ENCODE measurements at regions of chr6 and their contacts with region 1.

Region 1: DNA sequence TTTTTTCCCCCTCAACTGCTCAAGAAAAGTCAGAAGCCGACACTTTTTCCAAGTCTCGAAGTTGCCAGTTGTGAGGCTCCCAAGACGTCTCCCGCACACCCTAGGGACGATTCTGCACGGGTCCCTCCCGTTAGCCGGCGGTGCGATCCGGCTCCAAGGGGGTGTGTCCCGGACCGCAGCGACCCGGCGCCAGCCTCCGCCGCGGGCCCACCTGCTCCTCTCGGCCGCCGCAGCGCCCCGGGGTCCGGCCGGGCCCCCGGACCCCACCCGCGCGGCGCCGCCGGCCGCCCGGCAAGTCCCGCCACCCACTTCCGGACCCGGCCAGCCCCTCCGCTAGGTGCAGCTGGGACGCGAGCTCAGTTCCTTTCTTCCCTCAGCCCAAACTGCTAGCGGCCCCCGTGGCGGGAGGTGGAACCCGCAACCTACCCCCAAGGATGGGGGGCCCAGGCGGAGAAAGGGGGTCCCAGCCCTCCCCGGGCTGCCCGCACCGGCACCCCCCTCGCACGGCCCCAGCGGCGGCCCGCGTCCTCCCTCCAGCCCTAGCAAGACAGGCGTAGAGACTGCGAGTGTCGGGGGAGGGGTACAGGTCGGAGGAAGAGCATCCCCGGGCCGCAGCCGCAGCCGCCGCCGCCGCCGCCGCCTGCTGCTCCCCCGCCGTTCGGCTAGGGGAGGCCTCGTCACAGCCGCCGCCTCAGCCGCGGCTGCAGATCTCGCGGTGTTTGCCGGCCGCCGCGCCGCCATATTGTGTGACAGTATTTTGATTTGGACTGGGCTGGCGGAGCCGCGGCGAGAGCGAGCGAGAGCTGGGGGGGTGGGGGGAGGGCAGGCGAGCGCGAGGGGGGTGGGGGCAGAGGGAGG is 485 bp upstream of the TAB2 start:
- DNase-seq: peak; percentile 82 to 94 (median 88)
- ATAC-seq: peak; percentile 76 to 80
- H3K4me3 Mint-ChIP-seq: peak overlapping the region; percentile 80 to 96 (median 89)
- H3K27ac Mint-ChIP-seq: peak overlapping the region; percentile 47 to 95 (median 90)
- H3K4me1 Mint-ChIP-seq: peaks cover 20 to 44% (median 40%) of the 10 kb centered on the region in 4 donors
- H3K27me3 Mint-ChIP-seq: no peaks in the 10 kb centered on the region

Region 2: DNA sequence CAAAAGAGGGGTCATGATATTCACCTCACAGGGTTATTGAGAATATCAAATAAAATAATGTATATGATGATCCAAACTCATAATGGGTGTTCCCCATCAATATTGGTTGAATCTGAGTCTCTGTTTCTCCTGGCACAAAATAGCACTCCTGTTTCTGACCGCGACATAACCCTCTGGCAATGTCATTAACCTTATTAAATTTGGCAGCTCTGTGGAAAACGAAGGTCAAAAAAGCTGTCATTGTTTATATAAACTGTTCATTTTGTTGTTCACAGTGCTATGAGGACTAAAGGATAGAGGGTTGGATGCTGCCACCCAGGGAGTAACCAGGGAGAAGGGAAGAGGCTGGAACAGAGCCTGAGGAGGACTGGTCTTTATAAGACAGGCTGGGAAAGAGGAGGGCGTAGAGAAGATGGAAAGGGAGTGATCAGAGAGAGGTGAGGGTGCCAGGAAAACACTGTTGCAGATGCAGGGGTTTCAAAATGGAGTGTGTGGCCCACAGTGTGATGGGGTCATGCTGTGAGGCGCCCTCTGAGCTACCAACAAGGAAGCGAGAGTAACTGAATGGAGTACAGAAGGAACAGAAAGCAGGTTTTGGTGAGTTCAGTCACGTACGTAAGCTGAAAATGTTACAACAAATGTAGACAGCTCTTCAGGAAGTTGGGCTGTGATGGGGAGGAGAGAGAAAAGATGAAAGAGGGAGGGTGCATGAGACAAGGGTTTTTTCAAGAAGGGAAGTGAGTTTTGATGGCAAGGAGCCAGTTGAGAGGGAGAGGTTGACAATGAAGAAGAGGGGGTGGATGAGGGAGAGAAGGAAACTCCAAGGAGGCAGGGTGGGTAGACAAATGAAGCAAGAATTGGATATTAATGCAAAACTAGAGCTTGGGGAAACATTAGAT is 251.1 kb before region 1 on chr6:
- POLR2A ChIA-PET with region 1: interaction called, 15 read pairs
- DNase-seq: peak in 9 of 10 donors; percentile 46 to 90 (median 66)
- ATAC-seq: peak; percentile 97 to 98
- H3K4me3 Mint-ChIP-seq: peak overlapping the region; percentile 63 to 79 (median 71)
- H3K27ac Mint-ChIP-seq: peak overlapping the region; percentile 93 to 98 (median 97)
- H3K4me1 Mint-ChIP-seq: peaks cover 14 to 35% (median 26%) of the 10 kb centered on the region in 4 donors
- H3K27me3 Mint-ChIP-seq: no peaks in the 10 kb centered on the region

Region 3: DNA sequence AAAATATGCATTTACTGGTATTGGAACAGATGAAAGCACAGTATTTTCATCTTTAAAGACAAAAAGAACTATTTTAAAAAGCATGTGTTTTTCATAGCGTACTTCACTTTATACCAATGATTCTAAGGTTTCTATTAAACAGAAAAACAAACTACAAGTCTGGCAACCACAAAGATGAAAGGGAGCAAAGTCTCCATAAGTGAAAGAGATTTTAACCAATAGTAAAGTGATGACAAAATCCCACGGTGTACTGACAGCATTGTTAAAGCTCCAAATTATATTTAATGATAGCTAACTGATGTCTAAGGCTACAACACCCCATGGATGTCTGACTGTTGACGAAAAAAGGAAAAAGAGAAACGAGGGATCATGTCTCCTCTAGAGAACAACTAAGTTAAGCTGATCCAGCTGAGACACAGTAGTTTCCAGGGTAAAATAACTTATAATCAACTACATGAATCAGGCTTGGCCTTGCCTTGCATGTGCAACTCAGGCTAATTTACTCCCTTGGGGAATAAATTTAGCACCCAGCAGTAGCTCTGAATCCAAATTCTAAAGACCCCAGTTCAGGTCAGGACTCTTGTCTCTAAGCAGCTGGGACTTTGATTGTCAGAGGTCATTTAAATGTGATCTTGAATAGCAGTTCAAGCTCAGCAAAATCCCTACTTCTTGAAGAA is 55.5 kb before region 1 on chr6:
- POLR2A ChIA-PET with region 1: interaction called, 19 read pairs
- DNase-seq: peak in 3 of 10 donors; percentile 19 to 57 (median 36)
- ATAC-seq: peak; percentile 68 to 78
- H3K4me3 Mint-ChIP-seq: peak overlapping the region in 9 of 10 donors; percentile 13 to 77 (median 61)
- H3K27ac Mint-ChIP-seq: peak overlapping the region; percentile 60 to 95 (median 92)
- H3K4me1 Mint-ChIP-seq: peaks cover 28 to 69% (median 59%) of the 10 kb centered on the region in 4 donors
- H3K27me3 Mint-ChIP-seq: no peaks in the 10 kb centered on the region

Region 4: GRCh38 chr6:149284904-149285303 is 32.1 kb before region 1 on chr6:
- POLR2A ChIA-PET with region 1: no interaction called
- DNase-seq: no peak
- ATAC-seq: no peak
- H3K4me3 Mint-ChIP-seq: no peak overlapping the region
- H3K27ac Mint-ChIP-seq: no peak overlapping the region
- H3K4me1 Mint-ChIP-seq: peaks cover 5 to 7% (median 5%) of the 10 kb centered on the region in 4 donors
- H3K27me3 Mint-ChIP-seq: no peaks in the 10 kb centered on the region

Region 5: GRCh38 chr6:149328083-149328482 is 11.1 kb after region 1 on chr6:
- POLR2A ChIA-PET with region 1: interaction called, 13 read pairs
- DNase-seq: no peak
- ATAC-seq: no peak
- H3K4me3 Mint-ChIP-seq: peak overlapping the region in 7 of 10 donors; percentile 8 to 78 (median 20)
- H3K27ac Mint-ChIP-seq: peak overlapping the region in 1 of 10 donors; percentile 27
- H3K4me1 Mint-ChIP-seq: peaks cover 40 to 95% (median 79%) of the 10 kb centered on the region in 4 donors
- H3K27me3 Mint-ChIP-seq: no peaks in the 10 kb centered on the region